Right cardiac atrium (tissue), 5 donors: ENCODE measurements at regions of chr22 and their contacts with region 1.

Region 1: GRCh38 chr22:40487663-40488249 is 117.4 kb downstream of the SGSM3 start:
- DNase-seq: no peak
- ATAC-seq: no peak
- H3K4me3 ChIP-seq: no peak overlapping the region
- H3K27ac ChIP-seq: no peak overlapping the region
- H3K4me1 ChIP-seq: peaks cover 8% of the 10 kb centered on the region
- H3K27me3 ChIP-seq: no peaks in the 10 kb centered on the region

Region 2: GRCh38 chr22:40449676-40450035 is 38.1 kb before region 1 on chr22:
- intact Hi-C with region 1: loop called in 2 of 4 experiments (anchors 5 to 10 kb)
- DNase-seq: no peak
- ATAC-seq: peak; percentile 17 to 32
- H3K4me3 ChIP-seq: no peak overlapping the region
- H3K27ac ChIP-seq: peak overlapping the region; percentile 68
- H3K4me1 ChIP-seq: peaks cover 19% of the 10 kb centered on the region
- H3K27me3 ChIP-seq: no peaks in the 10 kb centered on the region

Region 3: GRCh38 chr22:40668611-40669411 is 181.1 kb after region 1 on chr22:
- intact Hi-C with region 1: no loop called
- DNase-seq: peak in 1 of 3 donors; percentile 30
- ATAC-seq: peak in 1 of 2 donors; percentile 76
- H3K4me3 ChIP-seq: no peak overlapping the region
- H3K27ac ChIP-seq: peak overlapping the region; percentile 85
- H3K4me1 ChIP-seq: peaks cover 19% of the 10 kb centered on the region
- H3K27me3 ChIP-seq: no peaks in the 10 kb centered on the region